Right ventricle myocardium inferior (tissue), 1 donor: ENCODE measurements at regions of chr5 and their contacts with region 1.

Region 1: DNA sequence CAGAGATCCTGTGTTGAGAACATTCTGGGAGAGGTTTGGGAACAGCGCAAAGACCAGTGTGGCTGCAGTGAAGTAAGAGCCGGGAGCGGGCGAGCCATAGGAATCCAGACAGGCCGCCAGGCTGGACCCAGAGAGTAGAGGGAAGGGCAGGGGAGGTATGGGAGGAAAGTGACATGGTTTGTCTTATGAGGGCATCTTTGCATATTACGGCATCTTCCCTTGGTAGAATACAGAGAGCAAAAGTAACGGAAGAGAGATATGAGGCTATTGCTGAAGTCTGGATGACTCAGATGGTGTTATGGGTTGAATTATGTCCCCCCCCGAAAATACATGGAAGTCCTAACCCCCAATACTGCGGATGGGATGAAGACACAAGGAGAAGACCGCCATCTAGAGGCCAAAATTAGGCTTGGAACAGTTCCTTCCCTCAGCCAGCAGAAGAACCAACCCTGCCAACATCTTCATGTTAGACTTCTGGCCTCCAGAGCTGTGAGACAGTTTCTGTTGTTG is 268.2 kb downstream of the MAST4 start:
- DNase-seq: peak; percentile 45
- ATAC-seq: peak; percentile 37

Region 2: DNA sequence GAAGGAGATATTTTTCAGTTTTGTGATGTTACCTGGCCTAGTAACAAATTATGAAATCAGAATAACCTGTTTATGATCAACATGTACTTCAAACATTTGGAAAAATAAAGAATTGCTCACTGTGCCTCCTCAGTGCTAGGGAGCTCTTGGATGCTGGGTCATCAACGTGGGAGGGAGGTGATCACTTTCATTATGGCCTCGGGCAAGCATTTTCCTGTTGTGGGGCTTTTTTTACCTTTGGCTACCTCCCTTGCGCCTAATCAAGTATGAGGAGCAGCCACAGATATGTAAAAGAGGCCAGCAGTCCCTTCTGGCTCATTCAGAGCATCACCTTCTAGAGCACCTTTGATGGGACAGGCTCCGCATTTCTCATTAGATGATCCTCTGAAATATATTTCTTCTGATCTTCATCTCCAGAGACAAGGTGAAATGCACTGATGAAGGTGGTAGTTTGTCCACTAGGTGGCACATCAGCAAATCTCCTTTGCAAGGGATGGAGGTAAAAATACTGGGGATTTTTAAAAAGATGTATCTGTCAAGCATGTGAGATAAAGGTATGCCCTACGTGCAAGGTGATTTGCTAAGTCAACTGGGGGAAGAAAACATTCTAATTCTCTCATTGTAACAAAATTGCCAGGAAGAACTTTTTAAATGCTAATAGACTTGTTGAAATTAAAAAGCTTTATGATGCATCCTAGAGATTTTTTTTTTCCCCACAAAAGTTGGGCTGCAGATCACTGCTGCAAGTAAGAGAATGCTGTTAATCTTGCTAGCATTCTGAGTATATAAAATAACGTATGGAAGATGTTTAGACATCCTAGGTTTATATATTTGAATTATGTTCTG is 50.0 kb before region 1 on chr5:
- intact Hi-C with region 1: loop called (anchors 5 kb)
- DNase-seq: no peak
- ATAC-seq: no peak

Region 3: DNA sequence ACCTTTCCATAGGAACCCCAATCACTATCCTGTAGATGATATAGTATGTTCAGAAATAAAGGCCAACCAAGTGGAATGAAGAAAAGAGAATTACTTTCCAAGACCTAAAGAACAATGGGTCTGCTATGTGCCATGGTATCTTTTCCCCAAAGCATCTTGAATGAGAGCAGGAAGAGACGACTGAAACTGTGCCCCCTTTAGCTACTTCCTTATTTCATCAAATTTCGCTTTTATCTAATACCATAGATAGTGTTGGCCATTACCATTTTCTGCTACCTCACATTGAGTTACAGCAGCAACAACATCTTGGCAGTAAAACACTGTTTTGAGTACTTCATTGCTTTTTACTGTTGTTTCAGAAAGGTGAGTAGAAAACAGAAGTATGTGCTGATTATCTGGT is 65.6 kb after region 1 on chr5:
- intact Hi-C with region 1: loop called (anchors 2 kb)
- DNase-seq: no peak
- ATAC-seq: no peak